Thyroid gland (tissue), 4 donors: ENCODE measurements at regions of chr1 and their contacts with region 1.

Region 1: GRCh38 chr1:205061665-205062069 is 18.7 kb downstream of the CNTN2 start:
- DNase-seq: peak; percentile 89 to 90
- H3K4me3 ChIP-seq: no peak overlapping the region
- H3K27ac ChIP-seq: no peak overlapping the region
- H3K4me1 ChIP-seq: peaks cover 4 to 8% of the 10 kb centered on the region in 2 donors
- H3K27me3 ChIP-seq: no peaks in the 10 kb centered on the region
- CTCF ChIP-seq: peak; percentile 72 to 96 (median 84)
- POLR2A ChIP-seq: no peak

Region 2: GRCh38 chr1:204746838-204747442 is 314.7 kb before region 1 on chr1:
- intact Hi-C with region 1: no loop called
- DNase-seq: peak; percentile 40 to 47
- H3K4me3 ChIP-seq: no peak overlapping the region
- H3K27ac ChIP-seq: no peak overlapping the region
- H3K4me1 ChIP-seq: peaks cover 11 to 15% of the 10 kb centered on the region in 2 donors
- H3K27me3 ChIP-seq: no peaks in the 10 kb centered on the region
- CTCF ChIP-seq: peak; percentile 60 to 96 (median 76)
- POLR2A ChIP-seq: no peak

Region 3: DNA sequence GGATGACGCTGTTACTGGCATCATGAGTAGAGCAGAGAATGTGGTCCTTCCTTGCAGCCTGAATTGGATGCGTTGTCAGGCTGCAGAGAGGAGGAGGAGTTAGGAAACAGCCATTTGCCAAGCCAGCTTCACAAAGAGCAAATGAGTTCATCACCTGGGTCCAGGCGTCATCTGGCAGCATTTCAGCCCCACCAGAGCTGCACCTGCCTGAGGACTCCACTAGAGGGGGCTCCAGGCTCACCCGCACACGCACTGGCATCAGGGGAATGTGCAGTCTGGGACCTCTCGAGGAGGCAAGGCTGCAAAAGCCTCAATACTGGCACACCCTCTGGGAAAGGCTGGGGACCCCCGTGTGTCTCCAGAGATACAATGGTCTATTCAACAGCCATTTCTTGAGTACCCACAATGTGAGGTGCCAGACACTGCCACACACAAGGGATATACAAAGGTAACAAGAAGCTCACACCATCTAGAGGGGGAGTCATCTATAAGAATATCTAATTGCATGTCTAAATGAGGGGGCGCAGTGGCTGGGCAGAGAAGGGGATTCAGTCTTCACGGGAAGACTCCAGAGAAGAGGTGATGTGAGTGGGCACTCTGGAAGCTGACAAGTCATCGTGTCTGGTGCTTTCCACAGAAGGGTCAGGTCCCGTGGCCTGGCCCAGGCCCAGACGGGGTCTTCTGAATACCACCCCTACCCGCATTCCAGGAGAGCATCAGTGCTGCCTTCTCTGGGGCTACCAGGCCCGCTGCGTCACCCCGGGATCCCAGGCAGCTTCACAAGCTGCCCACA is 72.2 kb before region 1 on chr1:
- intact Hi-C with region 1: loop called (anchors 2 kb)
- DNase-seq: peak; percentile 63 to 68
- H3K4me3 ChIP-seq: no peak overlapping the region
- H3K27ac ChIP-seq: no peak overlapping the region
- H3K4me1 ChIP-seq: no peaks in the 10 kb centered on the region
- H3K27me3 ChIP-seq: no peaks in the 10 kb centered on the region
- CTCF ChIP-seq: peak; percentile 85 to 97 (median 94)
- POLR2A ChIP-seq: no peak

Region 4: DNA sequence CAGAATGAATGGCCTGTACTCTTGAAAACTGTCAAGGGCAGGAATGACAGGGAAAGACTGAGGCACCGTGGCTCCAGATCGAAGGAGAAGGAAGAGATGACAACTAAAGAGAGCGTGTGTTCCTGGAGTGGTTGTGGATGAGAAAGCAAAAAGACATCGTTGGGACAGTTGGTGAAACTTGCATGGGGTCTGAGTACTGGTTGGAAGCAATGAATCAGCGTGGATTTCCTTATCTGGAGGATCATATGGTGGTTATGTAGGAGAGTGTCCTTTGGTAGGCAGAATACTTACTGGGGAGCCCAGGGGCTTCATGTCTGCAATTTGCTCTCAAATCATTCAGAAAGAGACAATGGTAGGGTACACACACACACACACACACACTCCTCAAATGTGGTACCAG is 346.3 kb after region 1 on chr1:
- intact Hi-C with region 1: no loop called
- DNase-seq: no peak
- H3K4me3 ChIP-seq: no peak overlapping the region
- H3K27ac ChIP-seq: no peak overlapping the region
- H3K4me1 ChIP-seq: no peaks in the 10 kb centered on the region
- H3K27me3 ChIP-seq: no peaks in the 10 kb centered on the region
- CTCF ChIP-seq: no peak
- POLR2A ChIP-seq: no peak